Heart left ventricle (tissue), 16 donors: ENCODE measurements at regions of chr11 and their contacts with region 1.

Region 1: DNA sequence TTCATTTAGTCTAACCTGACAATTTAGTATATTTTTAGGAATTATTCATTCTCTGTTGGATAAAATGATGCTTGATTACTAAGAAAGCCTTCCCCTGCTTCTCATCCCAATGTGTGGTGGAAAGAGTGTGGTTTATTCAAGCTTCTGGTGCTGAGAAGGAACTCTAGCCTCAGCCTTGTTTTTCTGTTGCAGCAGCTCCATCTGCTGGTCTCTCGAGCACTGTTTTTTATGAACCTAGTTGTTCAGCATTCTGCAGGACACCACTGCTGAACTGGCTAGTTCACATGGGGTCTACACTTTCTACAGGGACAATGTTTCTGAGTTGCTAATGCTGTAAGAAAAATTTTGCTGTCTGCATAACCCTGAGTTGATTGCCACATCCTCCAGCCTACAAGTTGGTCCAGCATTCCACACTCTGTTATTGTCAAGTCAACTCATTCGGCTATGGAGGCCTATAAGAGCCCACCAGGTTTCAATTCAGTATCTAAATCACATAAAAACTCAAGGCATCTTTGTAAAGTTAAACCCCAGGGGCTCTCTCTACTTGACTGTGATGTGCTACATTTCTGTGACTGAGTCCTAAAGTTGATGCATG is 14.3 kb downstream of the OR2AG2 start:
- DNase-seq: peak in 4 of 5 donors; percentile 36 to 62 (median 49)
- ATAC-seq: peak in 3 of 4 donors; percentile 63 to 75 (median 74)
- H3K4me3 ChIP-seq: no peak overlapping the region
- H3K27ac ChIP-seq: no peak overlapping the region
- H3K4me1 ChIP-seq: no peaks in the 10 kb centered on the region
- H3K27me3 ChIP-seq: no peaks in the 10 kb centered on the region
- CTCF ChIP-seq: peak; percentile 41 to 77 (median 64)
- POLR2A ChIP-seq: no peak

Region 2: GRCh38 chr11:6531267-6531752 is 226.2 kb before region 1 on chr11:
- intact Hi-C with region 1: loop called in 5 of 10 experiments (anchors 2 to 5 kb)
- DNase-seq: no peak
- ATAC-seq: peak in 3 of 4 donors; percentile 49 to 55 (median 54)
- H3K4me3 ChIP-seq: no peak overlapping the region
- H3K27ac ChIP-seq: no peak overlapping the region
- H3K4me1 ChIP-seq: no peaks in the 10 kb centered on the region
- H3K27me3 ChIP-seq: no peaks in the 10 kb centered on the region
- CTCF ChIP-seq: peak; percentile 65 to 86 (median 79)
- POLR2A ChIP-seq: no peak

Region 3: DNA sequence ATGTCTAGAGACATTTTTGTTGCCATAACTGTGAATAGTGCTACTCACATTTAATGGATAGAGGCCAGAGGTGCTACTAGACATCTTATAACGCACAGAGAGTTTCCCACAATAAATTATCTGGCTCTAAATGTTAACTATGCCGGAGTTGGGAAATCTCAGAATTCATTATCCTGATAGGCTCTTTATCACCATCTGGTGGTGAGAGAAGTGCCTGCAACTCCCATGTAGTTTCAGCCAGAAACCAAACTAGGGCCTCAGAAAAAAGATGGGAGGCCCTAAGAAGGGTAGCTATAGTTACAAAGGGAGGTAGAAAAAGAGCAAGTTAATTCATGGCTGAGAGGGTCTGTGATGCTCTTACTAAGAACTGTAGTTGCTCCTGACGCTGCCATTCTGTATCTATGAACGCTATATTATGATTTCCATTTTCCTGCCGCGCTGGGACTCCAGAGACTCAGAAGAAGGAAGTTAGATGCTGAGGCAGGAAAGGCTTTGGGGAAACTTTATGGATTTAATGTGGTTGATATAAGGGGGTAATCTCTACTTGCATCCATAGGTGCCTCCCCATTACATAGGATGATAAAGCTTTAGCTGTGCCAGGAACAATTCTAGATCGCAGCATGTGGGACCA is 51.5 kb before region 1 on chr11:
- intact Hi-C with region 1: loop called in 4 of 10 experiments (anchors 5 to 10 kb)
- DNase-seq: peak in 1 of 5 donors; percentile 46
- ATAC-seq: peak in 3 of 4 donors; percentile 49 to 61 (median 59)
- H3K4me3 ChIP-seq: no peak overlapping the region
- H3K27ac ChIP-seq: peak overlapping the region in 8 of 12 donors; percentile 7 to 53 (median 30)
- H3K4me1 ChIP-seq: peaks cover 0 to 25% (median 16%) of the 10 kb centered on the region in 12 donors
- H3K27me3 ChIP-seq: no peaks in the 10 kb centered on the region
- CTCF ChIP-seq: peak; percentile 82 to 97 (median 93)
- POLR2A ChIP-seq: no peak

Region 4: GRCh38 chr11:6737872-6738466 is 19.5 kb before region 1 on chr11:
- intact Hi-C with region 1: loop called in 3 of 10 experiments (anchors 2 kb)
- DNase-seq: peak in 1 of 5 donors; percentile 38
- ATAC-seq: peak in 3 of 4 donors; percentile 39 to 68 (median 63)
- H3K4me3 ChIP-seq: no peak overlapping the region
- H3K27ac ChIP-seq: no peak overlapping the region
- H3K4me1 ChIP-seq: peaks cover 0 to 79% (median 0%) of the 10 kb centered on the region in 12 donors
- H3K27me3 ChIP-seq: no peaks in the 10 kb centered on the region
- CTCF ChIP-seq: peak; percentile 55 to 73 (median 63)
- POLR2A ChIP-seq: no peak

Region 5: GRCh38 chr11:6900327-6900999 is 143.0 kb after region 1 on chr11:
- intact Hi-C with region 1: no loop called
- DNase-seq: no peak
- ATAC-seq: no peak
- H3K4me3 ChIP-seq: no peak overlapping the region
- H3K27ac ChIP-seq: no peak overlapping the region
- H3K4me1 ChIP-seq: no peaks in the 10 kb centered on the region
- H3K27me3 ChIP-seq: no peaks in the 10 kb centered on the region
- CTCF ChIP-seq: no peak
- POLR2A ChIP-seq: no peak